Caco-2 (cell line): ENCODE measurements at regions of chr14 and their contacts with region 1.

Region 1: GRCh38 chr14:66624299-66624937 is 116.5 kb downstream of the GPHN start:
- DNase-seq: peak; percentile 55 to 61
- H3K4me3 ChIP-seq: no peak overlapping the region
- H3K4me3 Mint-ChIP-seq: no peak overlapping the region
- H3K27ac Mint-ChIP-seq: no peak overlapping the region
- H3K4me1 ChIP-seq: no peaks in the 10 kb centered on the region
- H3K4me1 Mint-ChIP-seq: peaks cover 6% of the 10 kb centered on the region
- H3K27me3 ChIP-seq: no peaks in the 10 kb centered on the region
- H3K27me3 Mint-ChIP-seq: no peaks in the 10 kb centered on the region
- CTCF ChIP-seq: peak in 1 of 2 experiments; percentile 68

Region 2: DNA sequence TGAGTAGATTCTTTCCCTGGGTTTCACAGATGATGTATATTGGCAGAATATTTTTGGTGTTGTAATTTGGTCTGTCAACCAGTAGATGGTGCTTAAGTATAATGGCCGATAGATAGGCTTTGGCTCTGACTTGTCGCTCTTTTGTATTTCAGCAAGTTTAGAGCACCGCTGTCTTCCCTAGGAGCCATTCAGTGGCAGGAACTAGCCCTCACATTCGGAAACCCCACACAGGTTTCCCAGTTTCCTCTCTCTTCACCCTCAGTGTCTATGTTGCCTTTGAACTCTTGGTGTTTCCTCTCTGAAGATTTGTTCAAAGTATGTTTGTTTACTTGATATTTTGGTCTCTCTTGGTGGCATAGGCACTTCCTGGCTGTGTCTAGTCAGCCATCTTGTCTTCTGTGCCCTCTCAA is 14.3 kb before region 1 on chr14:
- CTCF ChIA-PET with region 1: no interaction called
- POLR2A ChIA-PET with region 1: no interaction called
- intact Hi-C with region 1: no loop called
- DNase-seq: peak in 1 of 2 experiments; percentile 3
- H3K4me3 ChIP-seq: no peak overlapping the region
- H3K4me3 Mint-ChIP-seq: no peak overlapping the region
- H3K27ac Mint-ChIP-seq: no peak overlapping the region
- H3K4me1 ChIP-seq: no peaks in the 10 kb centered on the region
- H3K4me1 Mint-ChIP-seq: no peaks in the 10 kb centered on the region
- H3K27me3 ChIP-seq: no peaks in the 10 kb centered on the region
- H3K27me3 Mint-ChIP-seq: no peaks in the 10 kb centered on the region
- CTCF ChIP-seq: peak in 1 of 2 experiments; percentile 17

Region 3: GRCh38 chr14:66662374-66662773 is 38.0 kb after region 1 on chr14:
- CTCF ChIA-PET with region 1: interaction called, 5 read pairs
- POLR2A ChIA-PET with region 1: no interaction called
- intact Hi-C with region 1: loop called (anchors 1 kb)
- DNase-seq: peak in 1 of 2 experiments; percentile 36
- H3K4me3 ChIP-seq: no peak overlapping the region
- H3K4me3 Mint-ChIP-seq: no peak overlapping the region
- H3K27ac Mint-ChIP-seq: no peak overlapping the region
- H3K4me1 ChIP-seq: no peaks in the 10 kb centered on the region
- H3K4me1 Mint-ChIP-seq: no peaks in the 10 kb centered on the region
- H3K27me3 ChIP-seq: no peaks in the 10 kb centered on the region
- H3K27me3 Mint-ChIP-seq: no peaks in the 10 kb centered on the region
- CTCF ChIP-seq: peak; percentile 40 to 58

Region 4: DNA sequence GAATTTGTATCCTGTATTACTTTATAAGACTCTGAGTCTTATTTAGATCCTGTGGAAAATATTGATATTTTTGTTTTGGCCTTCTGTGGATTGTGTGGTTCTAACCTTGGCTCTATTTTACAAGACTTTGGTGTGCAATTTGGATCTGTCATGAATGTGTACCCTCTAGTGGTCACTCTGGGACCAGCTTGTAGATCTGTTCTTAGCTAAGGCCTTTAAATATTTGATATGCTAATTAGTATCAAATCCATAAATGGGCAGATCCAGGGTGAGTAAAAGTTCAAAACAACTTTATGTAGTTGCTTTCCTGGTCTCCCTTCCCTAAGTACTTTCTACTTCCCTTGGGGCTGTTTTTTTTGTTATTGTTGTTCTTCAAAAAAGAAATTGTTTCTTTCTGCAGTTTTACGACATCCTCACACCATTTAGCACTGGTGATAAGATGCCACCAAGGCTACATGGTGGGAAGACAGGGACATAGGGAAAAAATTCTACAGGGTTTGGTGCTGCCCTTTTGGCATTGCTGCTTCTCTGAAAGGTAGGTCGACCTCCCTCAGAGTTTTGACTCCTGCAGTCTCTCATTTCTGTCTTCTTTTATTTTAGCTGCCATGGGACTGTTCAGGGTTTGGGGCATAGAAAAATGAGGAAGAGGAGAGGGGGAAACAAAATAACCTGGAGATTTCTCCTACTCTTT is 122.0 kb after region 1 on chr14:
- CTCF ChIA-PET with region 1: interaction called, 13 read pairs
- POLR2A ChIA-PET with region 1: no interaction called
- intact Hi-C with region 1: loop called (anchors 1 kb)
- DNase-seq: peak in 1 of 2 experiments; percentile 22
- H3K4me3 ChIP-seq: no peak overlapping the region
- H3K4me3 Mint-ChIP-seq: no peak overlapping the region
- H3K27ac Mint-ChIP-seq: no peak overlapping the region
- H3K4me1 ChIP-seq: no peaks in the 10 kb centered on the region
- H3K4me1 Mint-ChIP-seq: no peaks in the 10 kb centered on the region
- H3K27me3 ChIP-seq: no peaks in the 10 kb centered on the region
- H3K27me3 Mint-ChIP-seq: no peaks in the 10 kb centered on the region
- CTCF ChIP-seq: peak; percentile 50 to 61

Region 5: DNA sequence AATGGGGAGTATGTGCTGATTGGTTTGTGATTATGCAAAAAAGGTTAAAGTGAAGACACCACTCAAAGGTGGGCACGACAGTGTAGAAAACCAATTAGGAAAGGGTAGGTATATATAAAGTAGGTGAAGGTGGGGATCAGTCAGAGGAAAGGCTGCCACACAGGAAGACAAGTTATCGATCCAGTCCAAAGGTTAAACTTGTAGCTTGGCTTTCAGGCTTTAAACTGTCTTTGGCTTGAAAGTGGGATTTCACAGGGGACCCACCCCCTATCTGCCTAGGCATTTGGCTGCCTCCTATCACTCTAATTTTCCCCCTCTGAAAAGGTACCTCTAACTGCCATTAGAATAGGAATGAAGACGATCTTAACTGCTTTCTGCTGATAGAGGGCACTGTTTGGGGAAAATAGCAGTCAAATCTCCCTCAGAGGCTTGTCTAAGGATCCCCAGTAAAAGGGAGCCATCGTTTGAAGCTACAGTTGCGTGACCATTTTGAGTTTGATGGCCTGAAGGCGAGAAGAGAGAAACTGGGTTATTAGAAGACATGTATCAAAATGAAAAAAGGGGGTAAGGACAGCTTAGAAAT is 133.7 kb after region 1 on chr14:
- CTCF ChIA-PET with region 1: no interaction called
- POLR2A ChIA-PET with region 1: no interaction called
- intact Hi-C with region 1: no loop called
- DNase-seq: peak in 1 of 2 experiments; percentile 3
- H3K4me3 ChIP-seq: no peak overlapping the region
- H3K4me3 Mint-ChIP-seq: no peak overlapping the region
- H3K27ac Mint-ChIP-seq: no peak overlapping the region
- H3K4me1 ChIP-seq: no peaks in the 10 kb centered on the region
- H3K4me1 Mint-ChIP-seq: no peaks in the 10 kb centered on the region
- H3K27me3 ChIP-seq: no peaks in the 10 kb centered on the region
- H3K27me3 Mint-ChIP-seq: no peaks in the 10 kb centered on the region
- CTCF ChIP-seq: no peak

Region 6: DNA sequence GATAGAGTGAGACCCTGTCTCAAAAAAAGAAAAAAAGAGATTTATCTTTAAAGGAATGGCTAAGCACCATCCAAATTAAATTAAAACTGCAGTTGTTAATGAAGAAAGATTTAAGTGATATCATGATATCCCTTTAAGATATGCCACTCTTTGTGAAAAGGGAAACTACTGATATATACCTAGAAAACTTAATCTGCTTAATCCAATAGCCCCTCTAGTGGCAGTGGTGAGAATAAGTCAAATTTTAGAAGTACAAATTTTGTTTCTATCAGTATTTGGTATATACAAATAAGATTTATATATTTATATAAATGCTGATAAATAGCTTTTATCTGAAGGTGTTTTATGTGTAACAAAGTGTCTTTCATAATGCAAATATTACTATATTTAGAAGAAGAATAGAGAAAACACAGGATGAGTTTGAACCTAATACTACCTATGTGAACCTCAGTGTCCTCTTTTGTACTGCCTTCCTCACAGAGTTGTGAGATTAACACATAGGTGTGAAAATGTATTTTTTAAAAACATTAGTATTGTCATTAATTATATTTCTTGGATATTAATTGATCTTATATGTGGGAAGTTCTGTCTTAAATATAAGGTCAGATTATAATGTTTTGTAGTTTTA is 513.4 kb after region 1 on chr14:
- CTCF ChIA-PET with region 1: no interaction called
- POLR2A ChIA-PET with region 1: no interaction called
- intact Hi-C with region 1: loop called (anchors 1 kb)
- DNase-seq: no peak
- H3K4me3 ChIP-seq: no peak overlapping the region
- H3K4me3 Mint-ChIP-seq: no peak overlapping the region
- H3K27ac Mint-ChIP-seq: no peak overlapping the region
- H3K4me1 ChIP-seq: no peaks in the 10 kb centered on the region
- H3K4me1 Mint-ChIP-seq: no peaks in the 10 kb centered on the region
- H3K27me3 ChIP-seq: no peaks in the 10 kb centered on the region
- H3K27me3 Mint-ChIP-seq: no peaks in the 10 kb centered on the region
- CTCF ChIP-seq: peak; percentile 40 to 55